Mammary epithelial cell (primary cell): ENCODE measurements at regions of chr14 and their contacts with region 1.

Region 1: GRCh38 chr14:56422703-56423213 is 156.8 kb upstream of the TMEM260 start:
- DNase-seq: peak; percentile 32
- H3K4me3 ChIP-seq: no peak overlapping the region
- H3K27ac ChIP-seq: no peak overlapping the region
- H3K4me1 ChIP-seq: no peaks in the 10 kb centered on the region
- H3K27me3 ChIP-seq: peaks cover 4% of the 10 kb centered on the region
- CTCF ChIP-seq: peak; percentile 67 to 78

Region 2: DNA sequence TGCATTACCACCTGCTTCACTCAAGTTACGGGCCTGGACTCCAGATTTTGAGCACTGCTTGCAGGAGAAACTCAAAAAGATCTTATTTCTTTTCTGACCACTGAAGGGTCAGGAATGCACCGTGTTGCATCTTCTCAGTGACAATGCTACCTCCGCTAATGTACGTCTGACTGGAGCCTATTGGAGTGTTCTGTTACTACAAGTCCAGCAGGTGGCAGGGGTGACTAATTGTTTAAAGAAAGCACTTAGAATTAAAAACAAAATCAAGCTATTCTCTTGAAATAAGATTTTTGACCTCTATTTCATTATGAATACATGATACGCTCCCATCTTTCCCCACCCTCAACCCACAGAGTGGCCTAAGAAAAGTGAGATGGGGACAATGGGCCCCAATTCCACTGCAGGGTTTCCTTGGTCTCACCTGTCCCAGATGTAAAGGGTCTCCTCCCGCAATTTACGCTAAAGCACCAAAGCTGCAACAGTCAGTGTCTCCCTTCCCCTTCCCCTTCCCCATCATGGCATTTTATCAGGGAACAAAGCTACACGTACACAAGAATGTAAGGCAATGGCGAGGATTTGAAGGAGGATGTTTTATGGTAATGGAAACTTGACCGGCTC is 984.6 kb before region 1 on chr14:
- CTCF ChIA-PET with region 1: no interaction called
- dilution Hi-C with region 1: no loop called
- in situ Hi-C with region 1: no loop called
- intact Hi-C with region 1: loop called (anchors 2 kb)
- DNase-seq: peak; percentile 42
- H3K4me3 ChIP-seq: no peak overlapping the region
- H3K27ac ChIP-seq: no peak overlapping the region
- H3K4me1 ChIP-seq: no peaks in the 10 kb centered on the region
- H3K27me3 ChIP-seq: no peaks in the 10 kb centered on the region
- CTCF ChIP-seq: peak; percentile 67 to 70

Region 3: DNA sequence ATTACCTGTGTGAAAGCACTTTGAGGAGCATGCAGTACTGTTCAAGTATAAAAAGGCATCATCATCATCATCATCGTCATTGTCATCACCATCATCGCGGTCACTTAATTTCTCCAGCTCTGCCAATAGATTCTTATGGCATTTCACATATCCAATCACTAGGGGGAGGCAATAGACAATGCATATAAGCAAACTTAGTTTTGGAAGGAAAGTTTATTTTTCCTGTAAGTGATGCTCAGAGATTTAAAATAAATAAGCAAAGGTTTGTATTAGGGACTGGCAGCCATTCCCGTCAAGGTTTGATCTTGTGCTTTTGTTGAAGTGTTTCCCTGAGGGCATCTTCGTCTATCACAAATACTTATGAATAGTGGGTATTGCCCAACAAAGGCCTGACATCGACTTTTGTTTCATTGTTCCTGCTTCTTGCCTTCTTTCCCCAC is 715.4 kb before region 1 on chr14:
- CTCF ChIA-PET with region 1: interaction called, 3 read pairs
- dilution Hi-C with region 1: no loop called
- in situ Hi-C with region 1: no loop called
- intact Hi-C with region 1: loop called (anchors 1 kb)
- DNase-seq: peak; percentile 47
- H3K4me3 ChIP-seq: no peak overlapping the region
- H3K27ac ChIP-seq: no peak overlapping the region
- H3K4me1 ChIP-seq: peaks cover 18% of the 10 kb centered on the region
- H3K27me3 ChIP-seq: no peaks in the 10 kb centered on the region
- CTCF ChIP-seq: peak; percentile 69 to 73

Region 4: GRCh38 chr14:55731881-55732498 is 690.8 kb before region 1 on chr14:
- CTCF ChIA-PET with region 1: no interaction called
- dilution Hi-C with region 1: no loop called
- in situ Hi-C with region 1: no loop called
- intact Hi-C with region 1: loop called (anchors 1 kb)
- DNase-seq: no peak
- H3K4me3 ChIP-seq: no peak overlapping the region
- H3K27ac ChIP-seq: no peak overlapping the region
- H3K4me1 ChIP-seq: no peaks in the 10 kb centered on the region
- H3K27me3 ChIP-seq: peaks cover 7% of the 10 kb centered on the region
- CTCF ChIP-seq: peak; percentile 63 to 71

Region 5: GRCh38 chr14:55846826-55847446 is 575.8 kb before region 1 on chr14:
- CTCF ChIA-PET with region 1: no interaction called
- dilution Hi-C with region 1: no loop called
- in situ Hi-C with region 1: no loop called
- intact Hi-C with region 1: loop called (anchors 10 kb)
- DNase-seq: no peak
- H3K4me3 ChIP-seq: no peak overlapping the region
- H3K27ac ChIP-seq: no peak overlapping the region
- H3K4me1 ChIP-seq: peaks cover 5% of the 10 kb centered on the region
- H3K27me3 ChIP-seq: no peaks in the 10 kb centered on the region
- CTCF ChIP-seq: no peak

Region 6: DNA sequence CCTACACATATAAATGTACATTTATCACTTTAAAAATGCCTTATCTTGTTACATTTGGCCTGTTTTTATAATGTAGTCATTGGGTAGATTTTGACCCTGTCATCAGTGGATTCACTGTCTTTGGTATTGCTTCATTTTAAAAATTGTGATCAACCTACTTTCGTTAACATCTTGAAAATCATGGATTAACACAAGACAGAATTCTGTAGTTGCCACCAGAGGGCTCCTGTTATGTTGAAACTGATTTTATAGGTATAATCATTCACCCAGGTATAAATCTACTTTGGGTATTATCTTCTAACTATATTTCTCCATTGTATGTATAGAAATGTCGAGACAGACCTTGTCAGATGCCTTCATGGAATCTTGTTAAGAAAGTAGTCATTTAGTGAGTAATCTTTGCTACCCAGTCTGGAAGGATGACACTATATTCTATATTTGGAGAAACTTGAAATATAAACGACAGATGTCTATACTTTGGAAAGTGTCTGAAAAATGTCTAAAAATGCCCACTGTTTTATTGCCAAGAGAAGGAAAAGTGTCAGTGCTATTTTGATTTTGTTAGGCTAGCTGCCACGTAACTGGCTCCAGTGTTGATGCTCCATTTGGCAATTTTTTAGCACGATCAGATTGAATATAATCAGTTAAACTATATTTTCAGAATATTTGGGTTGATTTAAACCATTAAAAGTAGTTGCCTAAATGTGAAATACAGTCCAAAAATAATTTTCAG is 175.1 kb before region 1 on chr14:
- CTCF ChIA-PET with region 1: no interaction called
- dilution Hi-C with region 1: no loop called
- in situ Hi-C with region 1: no loop called
- intact Hi-C with region 1: loop called (anchors 5 kb)
- DNase-seq: no peak
- H3K4me3 ChIP-seq: no peak overlapping the region
- H3K27ac ChIP-seq: no peak overlapping the region
- H3K4me1 ChIP-seq: no peaks in the 10 kb centered on the region
- H3K27me3 ChIP-seq: no peaks in the 10 kb centered on the region
- CTCF ChIP-seq: peak; percentile 18 to 42

Region 7: GRCh38 chr14:56463271-56463890 is 40.6 kb after region 1 on chr14:
- CTCF ChIA-PET with region 1: no interaction called
- dilution Hi-C with region 1: loop called (anchors 5 kb)
- in situ Hi-C with region 1: no loop called
- intact Hi-C with region 1: no loop called
- DNase-seq: no peak
- H3K4me3 ChIP-seq: no peak overlapping the region
- H3K27ac ChIP-seq: no peak overlapping the region
- H3K4me1 ChIP-seq: no peaks in the 10 kb centered on the region
- H3K27me3 ChIP-seq: no peaks in the 10 kb centered on the region
- CTCF ChIP-seq: no peak